AG04449 (cell line): ENCODE measurements at regions of chr17 and their contacts with region 1.

Region 1: GRCh38 chr17:75652915-75653549 is 13.9 kb downstream of the RECQL5 start:
- DNase-seq: no peak
- H3K4me3 ChIP-seq: no peak overlapping the region
- CTCF ChIP-seq: peak; percentile 78

Region 2: DNA sequence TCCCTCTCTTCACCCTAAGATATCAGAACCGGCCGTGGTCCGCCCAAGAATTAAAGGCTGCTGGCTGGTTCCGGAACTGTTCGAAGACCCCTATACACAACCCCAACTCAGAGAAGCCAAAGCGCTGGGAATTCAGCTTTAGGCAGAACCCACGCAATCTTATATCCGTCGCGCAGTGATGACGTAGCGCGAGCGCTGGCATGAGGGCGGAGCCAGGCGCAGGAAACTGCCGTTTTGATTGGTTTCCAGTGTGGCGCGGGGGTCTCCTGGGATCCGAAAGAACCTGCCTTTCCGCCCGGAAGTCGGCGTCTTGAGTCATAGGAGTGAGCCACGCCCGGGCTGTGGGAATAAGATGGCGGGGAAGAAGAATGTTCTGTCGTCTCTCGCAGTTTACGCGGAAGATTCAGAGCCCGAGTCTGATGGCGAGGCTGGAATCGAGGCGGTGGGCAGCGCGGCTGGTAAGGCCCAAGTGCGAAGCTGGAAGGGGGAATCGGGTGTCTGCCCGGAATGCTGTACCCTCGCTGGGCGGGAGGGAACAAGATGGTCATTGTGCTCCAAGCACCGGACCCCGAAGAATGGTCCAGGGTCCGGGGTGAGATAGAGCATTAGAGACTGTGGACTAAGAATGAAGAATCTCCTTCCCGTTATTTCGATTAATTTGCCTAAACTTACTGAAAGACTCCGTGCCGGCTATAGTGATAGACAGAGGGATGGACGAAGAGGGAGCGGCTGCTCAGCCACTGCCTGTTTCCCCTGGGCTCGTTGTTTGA is 14.2 kb after region 1 on chr17 and contains the starts of genes RECQL5 and SAP30BP:
- CTCF ChIA-PET with region 1: interaction called, 746 read pairs
- POLR2A ChIA-PET with region 1: interaction called, 4 read pairs
- DNase-seq: peak; percentile 90
- H3K4me3 ChIP-seq: peak within 1 kb of the TSS; percentile 100
- CTCF ChIP-seq: no peak